Activated CD4-positive, alpha-beta T cell treated with anti-CD3 and anti-CD28 coated beads for 36 hours (primary cell): ENCODE measurements at regions of chr3 and their contacts with region 1.

Region 1: GRCh38 chr3:39000008-39000450 is 51.7 kb downstream of the SCN11A start:
- DNase-seq: no peak
- ATAC-seq: peak; percentile 71
- H3K4me3 Mint-ChIP-seq: no peak overlapping the region
- H3K27ac Mint-ChIP-seq: no peak overlapping the region
- H3K4me1 Mint-ChIP-seq: no peaks in the 10 kb centered on the region
- H3K27me3 Mint-ChIP-seq: no peaks in the 10 kb centered on the region

Region 2: DNA sequence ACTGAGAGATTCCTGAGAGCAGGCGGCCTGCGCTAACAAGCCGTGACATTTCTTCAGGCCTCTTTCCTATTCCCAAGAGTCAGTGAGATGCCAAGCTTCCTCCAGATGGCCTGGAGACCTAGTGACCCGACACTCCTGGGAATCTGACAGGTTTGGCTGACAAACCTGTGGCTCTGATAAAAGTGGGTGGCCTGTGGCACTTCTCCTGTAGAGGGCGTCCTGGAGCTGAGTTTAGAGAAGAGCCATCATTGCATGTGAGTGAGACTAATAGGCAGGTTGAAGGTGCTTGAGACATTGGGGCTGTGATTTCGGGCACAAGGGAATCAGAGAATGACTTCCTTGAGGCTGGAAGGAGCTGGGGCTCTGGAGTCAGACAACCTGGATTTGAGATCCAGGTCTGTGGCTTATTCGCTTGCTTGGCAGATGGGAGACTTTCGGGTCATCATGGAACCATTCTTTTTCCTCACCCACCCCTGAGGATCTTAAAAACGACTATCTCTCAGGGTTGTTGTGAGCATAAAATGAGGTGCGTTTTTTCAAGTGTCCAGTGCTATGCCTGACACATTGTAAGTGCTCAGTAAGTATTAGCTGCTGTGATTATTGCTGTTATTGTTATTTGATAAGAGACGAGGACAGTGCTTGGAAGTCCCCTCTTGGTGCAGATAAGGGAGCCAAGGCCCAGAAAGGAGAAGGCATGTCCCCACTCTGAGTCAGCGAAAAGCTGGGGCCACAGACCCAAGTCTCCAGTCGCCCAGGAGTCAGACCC is 261.2 kb before region 1 on chr3:
- CTCF ChIA-PET with region 1: interaction called, 5 read pairs
- POLR2A ChIA-PET with region 1: no interaction called
- intact Hi-C with region 1: loop called in 1 of 2 experiments (anchors 1 kb)
- DNase-seq: peak; percentile 72
- ATAC-seq: no peak
- H3K4me3 Mint-ChIP-seq: no peak overlapping the region
- H3K27ac Mint-ChIP-seq: no peak overlapping the region
- H3K4me1 Mint-ChIP-seq: no peaks in the 10 kb centered on the region
- H3K27me3 Mint-ChIP-seq: peaks cover 23% of the 10 kb centered on the region

Region 3: GRCh38 chr3:39013289-39013688 is 13.3 kb after region 1 on chr3:
- CTCF ChIA-PET with region 1: interaction called, 13 read pairs
- POLR2A ChIA-PET with region 1: no interaction called
- intact Hi-C with region 1: no loop called
- DNase-seq: no peak
- ATAC-seq: no peak
- H3K4me3 Mint-ChIP-seq: no peak overlapping the region
- H3K27ac Mint-ChIP-seq: no peak overlapping the region
- H3K4me1 Mint-ChIP-seq: no peaks in the 10 kb centered on the region
- H3K27me3 Mint-ChIP-seq: peaks cover 7% of the 10 kb centered on the region

Region 4: GRCh38 chr3:39025222-39025970 is 25.4 kb after region 1 on chr3:
- CTCF ChIA-PET with region 1: interaction called, 16 read pairs
- POLR2A ChIA-PET with region 1: no interaction called
- intact Hi-C with region 1: loop called in 1 of 2 experiments (anchors 2 kb)
- DNase-seq: no peak
- ATAC-seq: no peak
- H3K4me3 Mint-ChIP-seq: no peak overlapping the region
- H3K27ac Mint-ChIP-seq: no peak overlapping the region
- H3K4me1 Mint-ChIP-seq: no peaks in the 10 kb centered on the region
- H3K27me3 Mint-ChIP-seq: peaks cover 5% of the 10 kb centered on the region